H1 (cell line): ENCODE measurements at regions of chr2 and their contacts with region 1.

Region 1: GRCh38 chr2:121649596-121650314 is 493 bp upstream of the CLASP1 start:
- DNase-seq: peak; percentile 91
- H3K4me3 ChIP-seq: peak overlapping the region; percentile 77 to 91 (median 82)
- H3K27ac ChIP-seq: peak overlapping the region; percentile 81
- H3K4me1 ChIP-seq: peaks cover 0 to 5% (median 2%) of the 10 kb centered on the region in 4 experiments; a peak in 3 of 7 replicates
- H3K27me3 ChIP-seq: no peaks in the 10 kb centered on the region
- CTCF ChIP-seq: no peak
- EP300 ChIP-seq: no peak
- POLR2A ChIP-seq: peak in 1 of 2 experiments; percentile 59; a peak in 2 of 3 replicates
- RAD21 ChIP-seq: 0 out of 4 replicates have a peak, but pooled peaks of 1 of the 2 experiments have one; percentile 1

Region 2: DNA sequence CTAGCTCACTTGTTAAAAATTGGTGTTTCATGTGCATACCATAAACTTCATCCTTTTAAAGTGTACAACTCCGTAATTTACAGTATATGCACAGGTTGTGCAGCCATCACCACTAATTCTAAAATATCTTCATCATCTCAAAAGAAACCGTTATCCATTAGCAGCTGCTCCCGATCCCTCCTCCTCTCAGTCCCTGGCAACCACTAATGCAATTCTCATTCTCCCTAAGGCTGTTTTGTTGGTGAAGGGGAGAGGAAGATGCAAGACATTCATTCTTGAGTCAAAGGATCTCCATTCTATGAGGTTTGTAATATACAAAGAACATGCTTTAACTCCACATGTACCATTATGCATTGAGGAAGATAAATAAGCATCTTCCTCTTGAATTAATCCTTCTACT is 70.4 kb before region 1 on chr2:
- CTCF ChIA-PET with region 1: no interaction called
- POLR2A ChIA-PET with region 1: no interaction called
- DNase-seq: no peak
- H3K4me3 ChIP-seq: no peak overlapping the region
- H3K27ac ChIP-seq: no peak overlapping the region
- H3K4me1 ChIP-seq: peaks cover 0 to 4% (median under 1%) of the 10 kb centered on the region in 4 experiments; a peak in 3 of 7 replicates
- H3K27me3 ChIP-seq: no peaks in the 10 kb centered on the region
- CTCF ChIP-seq: no peak
- EP300 ChIP-seq: no peak
- POLR2A ChIP-seq: no peak
- RAD21 ChIP-seq: no peak

Region 3: DNA sequence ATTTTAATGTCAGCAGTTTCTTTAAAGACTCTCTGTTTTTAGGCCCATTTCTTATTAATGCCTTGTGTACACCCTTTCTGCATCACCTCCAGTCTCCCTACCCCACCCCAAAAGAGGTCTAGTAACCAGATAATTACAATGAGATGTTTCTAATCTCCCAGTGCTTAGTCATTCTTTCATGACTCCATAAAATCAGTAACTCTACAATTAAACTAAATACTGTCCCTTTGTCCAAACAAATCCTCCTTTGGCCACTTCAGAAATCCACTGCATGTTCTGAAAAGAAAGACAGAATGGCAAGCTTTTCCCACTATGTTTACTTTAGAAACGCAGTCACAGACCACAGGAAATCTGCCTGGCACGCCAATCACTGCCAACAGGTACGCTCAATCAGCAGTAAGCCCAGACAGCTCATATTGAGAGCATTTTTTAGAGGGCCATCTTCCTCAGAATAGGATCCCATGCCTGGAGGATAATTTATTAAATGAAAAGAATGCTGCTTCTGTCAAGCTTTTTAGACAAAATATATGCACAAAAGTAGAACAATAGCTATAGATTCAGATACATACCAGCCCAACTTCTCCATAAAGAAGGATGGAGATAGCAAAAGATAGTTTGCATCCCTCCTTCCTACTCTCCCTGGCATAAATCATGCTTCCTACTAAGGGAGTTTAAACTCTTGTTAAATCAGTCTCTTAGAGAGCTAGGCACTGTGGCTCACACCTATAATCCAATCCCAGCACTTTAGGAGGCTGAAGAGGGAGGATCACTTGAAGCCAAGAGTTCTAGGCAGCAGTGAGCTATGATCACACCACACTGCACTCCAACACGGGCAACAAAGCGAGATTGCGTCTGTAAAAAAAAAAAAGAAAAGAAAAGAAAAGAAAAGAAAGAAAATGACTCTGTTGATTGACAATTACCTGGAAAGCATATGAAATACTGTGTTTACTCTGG is 15.1 kb before region 1 on chr2:
- CTCF ChIA-PET with region 1: interaction called, 3 read pairs
- POLR2A ChIA-PET with region 1: interaction called, 10 read pairs
- DNase-seq: no peak
- H3K4me3 ChIP-seq: no peak overlapping the region
- H3K27ac ChIP-seq: no peak overlapping the region
- H3K4me1 ChIP-seq: no peaks in the 10 kb centered on the region
- H3K27me3 ChIP-seq: no peaks in the 10 kb centered on the region
- CTCF ChIP-seq: no peak
- EP300 ChIP-seq: no peak
- POLR2A ChIP-seq: no peak
- RAD21 ChIP-seq: no peak

Region 4: DNA sequence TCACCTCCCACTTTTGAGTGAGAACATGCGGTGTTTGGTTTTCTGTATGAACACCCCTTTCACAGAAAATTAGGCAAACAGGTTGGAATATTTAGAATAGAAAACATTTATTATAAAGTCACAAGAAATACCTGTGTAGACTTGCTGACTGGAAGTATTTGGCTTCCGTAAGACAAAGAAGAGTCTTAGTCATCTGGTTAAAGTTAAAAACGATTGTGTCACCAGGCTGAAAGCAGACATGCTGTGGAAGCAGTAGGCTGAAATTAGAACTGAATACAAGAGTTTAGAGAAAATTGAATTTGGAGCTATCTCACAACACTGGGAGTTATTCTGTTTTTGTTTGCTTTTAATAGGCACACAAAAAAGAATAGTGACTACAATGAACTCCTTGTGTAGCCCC is 15.7 kb after region 1 on chr2:
- CTCF ChIA-PET with region 1: interaction called, 5 read pairs
- POLR2A ChIA-PET with region 1: interaction called, 20 read pairs
- DNase-seq: no peak
- H3K4me3 ChIP-seq: no peak overlapping the region
- H3K27ac ChIP-seq: no peak overlapping the region
- H3K4me1 ChIP-seq: peaks cover 0 to 4% (median under 1%) of the 10 kb centered on the region in 4 experiments; a peak in 4 of 7 replicates
- H3K27me3 ChIP-seq: no peaks in the 10 kb centered on the region; a peak in 1 of 7 replicates
- CTCF ChIP-seq: no peak
- EP300 ChIP-seq: no peak
- POLR2A ChIP-seq: no peak
- RAD21 ChIP-seq: no peak

Region 5: DNA sequence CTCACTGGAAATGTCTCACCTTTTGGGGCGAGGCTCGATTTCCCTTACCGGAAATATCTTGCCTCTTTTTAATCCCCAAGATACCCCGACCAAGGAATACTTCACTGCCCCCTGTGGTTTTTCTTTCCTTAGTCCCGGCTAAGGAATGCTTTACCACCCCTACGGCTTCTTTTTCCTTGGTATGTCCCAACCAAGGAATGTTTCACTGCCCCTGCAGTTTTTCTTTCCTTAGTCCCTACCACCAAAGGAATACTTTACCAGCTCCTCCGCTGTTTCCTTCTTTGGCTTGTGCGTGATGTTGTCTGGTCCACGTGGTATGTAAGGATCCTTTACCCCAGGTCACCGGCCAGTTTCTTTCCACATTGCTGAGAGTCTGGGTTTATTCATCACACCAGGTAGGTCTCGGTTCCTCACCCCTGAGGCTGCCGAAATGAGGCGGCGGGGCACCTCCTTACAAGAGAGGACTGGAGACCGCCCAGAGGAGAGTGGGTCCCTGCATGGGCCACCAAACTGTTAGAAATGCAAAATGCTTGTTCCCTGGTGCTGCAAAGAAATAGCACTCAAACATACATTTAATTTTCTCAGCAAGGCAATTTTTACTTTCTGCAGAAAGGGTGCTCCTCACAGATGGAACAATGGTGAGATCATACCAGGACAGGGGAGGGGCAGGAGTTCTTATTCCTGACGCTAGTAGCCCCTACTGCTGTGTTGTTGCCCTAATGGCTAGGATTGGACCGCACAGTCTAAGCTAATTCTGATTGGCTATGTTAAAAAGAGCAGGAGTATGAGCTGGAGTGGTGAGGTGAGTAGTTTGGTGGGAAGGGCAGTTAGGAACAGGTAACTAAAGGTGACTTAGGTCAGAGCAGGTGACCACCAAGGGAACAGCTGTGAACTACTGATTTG is 32.9 kb after region 1 on chr2:
- CTCF ChIA-PET with region 1: interaction called, 3 read pairs
- POLR2A ChIA-PET with region 1: interaction called, 42 read pairs
- DNase-seq: peak in 1 of 2 experiments; percentile 68
- H3K4me3 ChIP-seq: peak overlapping the region; percentile 76 to 90 (median 86)
- H3K27ac ChIP-seq: peak overlapping the region; percentile 93
- H3K4me1 ChIP-seq: peaks cover 8 to 26% (median 18%) of the 10 kb centered on the region in 4 experiments
- H3K27me3 ChIP-seq: no peaks in the 10 kb centered on the region; a peak in 1 of 7 replicates
- CTCF ChIP-seq: no peak
- EP300 ChIP-seq: peak in 1 of 2 experiments; percentile 99; a peak in 2 of 3 replicates
- POLR2A ChIP-seq: peak; percentile 83 to 89
- RAD21 ChIP-seq: no peak

Region 6: DNA sequence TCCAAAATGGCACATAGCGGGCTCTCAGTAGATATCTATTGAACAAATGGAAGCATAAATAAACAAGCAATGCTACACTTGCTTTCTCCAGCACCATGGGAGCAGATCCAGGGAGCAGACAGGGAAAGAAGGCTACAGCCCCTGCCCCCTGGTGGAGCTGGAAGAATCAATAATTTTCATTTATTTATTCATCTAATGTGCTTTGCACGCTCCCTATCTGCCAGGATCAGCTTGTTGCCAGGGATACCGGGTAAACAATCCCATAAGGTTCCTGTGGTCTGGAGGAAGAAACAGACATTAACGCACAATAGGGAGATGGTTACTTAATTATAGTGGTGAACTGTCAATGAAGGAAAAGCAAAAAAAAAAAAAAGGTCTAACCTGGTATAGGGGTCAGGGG is 39.6 kb after region 1 on chr2:
- CTCF ChIA-PET with region 1: interaction called, 3 read pairs
- POLR2A ChIA-PET with region 1: interaction called, 10 read pairs
- DNase-seq: no peak
- H3K4me3 ChIP-seq: no peak overlapping the region
- H3K27ac ChIP-seq: no peak overlapping the region
- H3K4me1 ChIP-seq: peaks cover 4 to 15% (median 10%) of the 10 kb centered on the region in 4 experiments
- H3K27me3 ChIP-seq: no peaks in the 10 kb centered on the region
- CTCF ChIP-seq: peak in 2 of 3 experiments; percentile 25 to 28; a peak in 2 of 4 replicates
- EP300 ChIP-seq: no peak
- POLR2A ChIP-seq: no peak
- RAD21 ChIP-seq: peak; percentile 28 to 40; a peak in 2 of 4 replicates